A673 (cell line): ENCODE measurements at regions of chr22 and their contacts with region 1.

Region 1: DNA sequence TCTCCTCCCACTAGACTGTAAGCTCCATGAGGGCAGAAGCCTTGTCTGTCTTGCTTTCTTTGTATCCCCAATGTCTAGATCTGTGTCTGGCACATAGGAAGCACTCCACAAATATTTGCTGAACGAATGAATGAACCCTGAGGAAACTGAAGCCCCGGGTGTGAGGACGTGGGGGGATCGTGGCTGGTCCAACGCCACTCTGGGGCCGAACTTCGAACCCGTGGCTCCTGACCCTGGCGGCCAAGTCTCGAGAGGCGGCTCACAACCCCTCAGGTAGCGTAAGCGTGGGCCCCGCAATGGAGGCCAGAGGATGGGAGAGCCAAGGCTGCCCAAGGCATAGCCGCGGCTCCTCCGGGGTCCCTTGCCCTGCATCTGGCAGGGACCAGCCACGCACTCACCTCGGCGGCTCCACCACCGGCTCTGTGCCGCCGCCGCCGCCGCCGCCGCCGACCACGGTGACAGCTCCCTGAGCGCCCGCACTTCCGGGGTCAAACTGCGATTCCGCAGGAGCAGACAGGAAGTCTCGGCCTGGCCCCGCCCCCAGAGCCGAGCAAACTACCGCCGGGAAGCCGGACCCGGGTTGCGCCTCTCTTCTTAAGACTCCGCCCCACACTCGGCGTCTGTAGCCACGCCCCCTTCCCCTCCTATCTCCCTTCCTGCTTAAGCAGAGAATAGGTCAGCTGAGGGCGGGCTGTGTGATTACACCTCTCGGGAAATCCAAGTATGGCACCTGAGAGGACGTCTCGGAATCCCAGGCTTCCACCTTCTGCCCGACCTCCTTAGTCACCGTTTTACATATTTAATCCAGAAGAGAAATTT is at the start of gene ASCC2:
- DNase-seq: peak; percentile 99
- H3K4me3 ChIP-seq: peak within 1 kb of the TSS; percentile 77
- H3K27ac ChIP-seq: peak within 1 kb of the TSS; percentile 78
- H3K4me1 ChIP-seq: peaks cover 12% of the 10 kb centered on the region
- H3K27me3 ChIP-seq: no peaks in the 10 kb centered on the region
- CTCF ChIP-seq: no peak
- total RNA-seq, gene ASCC2: 54.5 and 54.9 TPM in 2 replicates

Region 2: GRCh38 chr22:28560046-28560742 is 1277.8 kb before region 1 on chr22:
- CTCF ChIA-PET with region 1: no interaction called
- POLR2A ChIA-PET with region 1: no interaction called
- intact Hi-C with region 1: no loop called
- DNase-seq: peak; percentile 17
- H3K4me3 ChIP-seq: no peak overlapping the region
- H3K27ac ChIP-seq: no peak overlapping the region
- H3K4me1 ChIP-seq: no peaks in the 10 kb centered on the region
- H3K27me3 ChIP-seq: no peaks in the 10 kb centered on the region
- CTCF ChIP-seq: no peak

Region 3: DNA sequence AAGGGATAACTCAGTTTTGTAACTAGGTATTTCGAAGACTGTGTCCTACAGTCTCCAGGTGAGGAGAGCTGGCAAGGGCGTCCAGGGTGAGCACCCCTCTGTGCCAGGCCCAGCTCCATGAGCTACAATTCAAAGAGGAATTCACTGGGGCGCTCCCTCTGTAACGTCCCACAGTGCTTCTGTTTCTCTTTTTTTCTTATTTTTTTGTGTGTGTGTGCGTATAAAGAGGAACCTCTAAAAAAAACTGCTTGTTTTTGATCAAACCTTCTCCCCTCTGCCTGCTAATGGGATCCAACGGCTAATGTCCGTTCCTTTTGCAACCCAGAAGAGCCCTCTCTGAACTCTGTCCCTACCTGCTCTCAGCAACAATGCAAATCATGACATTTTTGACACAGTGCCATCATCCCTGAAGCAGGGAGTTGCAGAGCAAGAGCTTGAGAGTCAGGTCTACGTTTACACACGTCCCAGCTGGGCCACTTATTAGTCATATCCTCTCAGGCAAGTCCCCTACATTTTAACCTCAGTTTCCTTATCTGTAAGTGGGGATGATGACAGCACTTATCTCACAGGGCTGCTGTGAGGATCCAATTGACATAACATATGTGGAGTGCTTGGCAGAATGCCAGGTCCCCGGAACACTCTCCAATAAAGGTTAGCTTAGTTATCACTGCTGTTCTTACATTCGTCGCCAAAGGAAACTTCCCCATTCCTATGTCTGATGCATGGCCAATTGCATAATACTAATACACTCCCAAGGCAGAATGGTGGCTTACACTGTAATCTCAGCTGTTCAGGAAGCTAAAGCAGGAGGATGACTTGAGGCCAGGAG is 16.8 kb before region 1 on chr22:
- CTCF ChIA-PET with region 1: no interaction called
- POLR2A ChIA-PET with region 1: no interaction called
- intact Hi-C with region 1: no loop called
- DNase-seq: peak; percentile 81
- H3K4me3 ChIP-seq: no peak overlapping the region
- H3K27ac ChIP-seq: no peak overlapping the region
- H3K4me1 ChIP-seq: no peaks in the 10 kb centered on the region
- H3K27me3 ChIP-seq: no peaks in the 10 kb centered on the region
- CTCF ChIP-seq: no peak

Region 4: DNA sequence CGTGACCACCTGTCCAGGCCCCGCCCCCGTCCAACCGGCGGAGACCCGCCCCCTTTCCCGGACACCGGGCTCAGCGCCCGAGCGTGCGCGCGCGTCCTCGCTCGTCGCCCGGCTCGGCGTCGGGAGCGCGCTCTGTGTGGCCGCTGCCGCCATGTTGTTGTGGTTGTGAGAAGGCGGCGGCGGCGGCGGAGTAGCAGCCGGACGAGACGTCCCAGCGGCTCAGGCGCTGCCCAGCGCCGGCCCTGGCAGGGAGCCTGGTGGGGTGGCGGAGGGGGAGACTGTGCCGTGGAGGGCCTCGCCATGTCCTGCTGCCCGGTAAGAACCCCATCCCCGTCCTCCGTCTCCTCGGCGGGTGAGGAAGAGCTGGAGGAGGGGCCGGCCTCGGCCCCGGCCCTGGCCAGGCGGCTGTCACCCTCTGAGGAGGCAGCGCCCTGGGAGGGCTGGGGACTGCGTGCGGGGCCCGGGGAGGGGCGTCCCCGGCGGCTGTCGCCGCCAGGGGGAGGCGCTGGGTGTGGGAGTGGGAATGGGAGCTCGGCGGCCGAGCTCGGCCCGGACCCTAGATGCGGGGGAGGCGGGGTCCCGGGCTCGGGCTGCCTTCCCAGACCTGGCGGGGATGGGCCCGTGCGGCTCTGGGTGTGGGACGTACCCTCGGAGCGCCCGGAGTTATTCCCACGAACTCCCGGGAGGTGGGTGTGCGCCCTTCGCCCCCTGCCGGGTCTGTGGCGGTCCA is 45.2 kb after region 1 on chr22 and contains the start of gene MTMR3:
- CTCF ChIA-PET with region 1: no interaction called
- POLR2A ChIA-PET with region 1: interaction called, 12 read pairs
- intact Hi-C with region 1: no loop called
- DNase-seq: peak; percentile 93
- H3K4me3 ChIP-seq: peak within 1 kb of the TSS; percentile 97
- H3K27ac ChIP-seq: peak within 1 kb of the TSS; percentile 93
- H3K4me1 ChIP-seq: peaks cover 22% of the 10 kb centered on the region
- H3K27me3 ChIP-seq: no peaks in the 10 kb centered on the region
- CTCF ChIP-seq: peak; percentile 41; the same call in 1 of the 2 replicates
- total RNA-seq, gene MTMR3: 25.0 and 26.4 TPM in 2 replicates